ENCODE measurements at regions of chr2 and their contacts with region 1.

Region 1: DNA sequence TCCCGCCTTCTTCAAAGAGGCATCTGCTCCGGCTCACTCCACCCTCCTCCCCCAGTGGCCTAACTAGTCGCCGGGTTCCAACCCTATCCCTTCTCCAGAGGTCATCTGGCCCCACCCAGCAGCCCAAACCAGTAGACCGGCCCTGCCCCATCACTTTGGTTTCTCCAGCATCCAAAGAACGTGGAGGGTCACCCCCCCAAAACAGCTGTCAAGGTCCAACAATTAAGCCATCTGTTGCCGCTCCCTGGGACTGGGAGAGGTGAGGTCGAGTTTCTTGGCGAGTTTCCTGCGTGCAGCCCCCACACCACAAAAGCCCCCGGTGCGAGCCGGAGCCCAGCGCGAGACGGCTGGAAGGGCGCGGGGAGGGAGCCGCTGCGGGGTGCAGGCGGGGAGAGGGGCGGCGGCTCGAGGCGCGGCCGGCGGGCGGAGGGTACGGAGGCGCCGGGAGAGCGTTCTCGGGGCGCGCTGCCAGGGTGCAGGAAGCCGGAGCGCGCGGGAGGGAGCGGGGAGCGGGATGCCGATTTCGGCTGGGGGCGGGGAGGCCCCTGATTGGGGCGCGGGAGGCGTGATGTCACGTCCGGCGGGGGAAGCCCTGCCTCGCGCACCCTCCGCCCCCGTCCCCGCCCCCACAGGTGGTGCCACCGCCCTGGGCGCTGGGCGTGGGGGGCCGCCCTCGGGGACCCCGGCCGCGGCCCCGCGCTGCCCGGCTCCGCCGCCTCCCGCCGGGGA is 571 bp upstream of the GPC1 start:
- DNase-seq: peak; percentile 79 to 99
- H3K4me3 ChIP-seq: peak overlapping the region; percentile 62
- H3K27ac ChIP-seq: peak overlapping the region; percentile 87
- H3K4me1 ChIP-seq: peaks cover 45% of the 10 kb centered on the region
- H3K27me3 ChIP-seq: no peaks in the 10 kb centered on the region
- CTCF ChIP-seq: no peak

Region 2: GRCh38 chr2:240149943-240150784 is 284.7 kb before region 1 on chr2:
- CTCF ChIA-PET with region 1: no interaction called
- POLR2A ChIA-PET with region 1: no interaction called
- intact Hi-C with region 1: loop called (anchors 1 kb)
- DNase-seq: peak in 1 of 2 experiments; percentile 72
- H3K4me3 ChIP-seq: no peak overlapping the region
- H3K27ac ChIP-seq: no peak overlapping the region
- H3K4me1 ChIP-seq: no peaks in the 10 kb centered on the region
- H3K27me3 ChIP-seq: peaks cover 48% of the 10 kb centered on the region
- CTCF ChIP-seq: peak; percentile 95

Region 3: GRCh38 chr2:240300261-240300821 is 134.6 kb before region 1 on chr2:
- CTCF ChIA-PET with region 1: no interaction called
- POLR2A ChIA-PET with region 1: no interaction called
- intact Hi-C with region 1: loop called (anchors 5 kb)
- DNase-seq: no peak
- H3K4me3 ChIP-seq: no peak overlapping the region
- H3K27ac ChIP-seq: no peak overlapping the region
- H3K4me1 ChIP-seq: no peaks in the 10 kb centered on the region
- H3K27me3 ChIP-seq: peaks cover 36% of the 10 kb centered on the region
- CTCF ChIP-seq: no peak

Region 4: DNA sequence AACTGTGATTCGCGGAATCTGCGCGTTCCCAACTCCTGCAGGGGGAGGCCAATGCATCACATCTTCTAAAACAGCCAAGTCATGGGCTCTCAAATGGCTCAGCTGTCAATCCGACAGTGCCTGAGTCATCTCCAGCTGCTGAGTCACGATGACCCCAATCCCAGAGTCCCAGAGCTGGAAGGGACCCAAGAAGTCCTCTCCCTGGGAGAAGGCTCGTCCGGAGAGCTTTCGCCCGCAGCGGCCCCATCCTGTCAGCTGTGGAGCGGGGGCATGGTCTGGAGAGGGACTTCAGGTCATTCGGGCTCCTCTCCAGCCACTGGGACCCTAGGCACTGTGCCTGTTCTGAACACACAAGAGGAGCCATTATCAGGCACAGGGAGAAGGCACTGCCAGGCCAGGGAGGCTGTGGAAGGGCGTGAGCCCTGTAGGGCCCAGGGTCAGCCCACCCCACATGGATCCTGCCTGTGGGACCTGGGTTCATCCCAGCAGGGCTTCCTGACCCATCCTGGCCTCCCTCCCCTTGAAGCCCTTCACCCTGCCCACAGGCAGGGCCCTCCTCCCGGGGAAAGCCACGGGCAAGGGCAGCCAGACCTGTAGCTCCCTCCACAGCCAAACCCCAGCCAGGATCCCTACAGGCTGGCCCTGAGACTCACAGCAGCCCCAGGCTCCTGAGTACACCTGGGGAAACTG is 47.1 kb before region 1 on chr2:
- CTCF ChIA-PET with region 1: no interaction called
- POLR2A ChIA-PET with region 1: interaction called, 3 read pairs
- intact Hi-C with region 1: loop called (anchors 1 kb)
- DNase-seq: peak; percentile 88 to 95
- H3K4me3 ChIP-seq: peak overlapping the region; percentile 48; the same call in 1 of the 2 replicates
- H3K27ac ChIP-seq: peak overlapping the region; percentile 75
- H3K4me1 ChIP-seq: peaks cover 27% of the 10 kb centered on the region
- H3K27me3 ChIP-seq: no peaks in the 10 kb centered on the region
- CTCF ChIP-seq: no peak

Region 5: GRCh38 chr2:240566203-240567136 is 131.6 kb after region 1 on chr2:
- CTCF ChIA-PET with region 1: no interaction called
- POLR2A ChIA-PET with region 1: no interaction called
- intact Hi-C with region 1: loop called (anchors 5 kb)
- DNase-seq: peak; percentile 84 to 99
- H3K4me3 ChIP-seq: peak overlapping the region; percentile 67
- H3K27ac ChIP-seq: peak overlapping the region; percentile 100
- H3K4me1 ChIP-seq: peaks cover 71% of the 10 kb centered on the region
- H3K27me3 ChIP-seq: no peaks in the 10 kb centered on the region
- CTCF ChIP-seq: peak; percentile 90

Measured in PC-9 (cell line).